OCI-LY7 (cell line): ENCODE measurements at regions of chr2 and their contacts with region 1.

Region 1: DNA sequence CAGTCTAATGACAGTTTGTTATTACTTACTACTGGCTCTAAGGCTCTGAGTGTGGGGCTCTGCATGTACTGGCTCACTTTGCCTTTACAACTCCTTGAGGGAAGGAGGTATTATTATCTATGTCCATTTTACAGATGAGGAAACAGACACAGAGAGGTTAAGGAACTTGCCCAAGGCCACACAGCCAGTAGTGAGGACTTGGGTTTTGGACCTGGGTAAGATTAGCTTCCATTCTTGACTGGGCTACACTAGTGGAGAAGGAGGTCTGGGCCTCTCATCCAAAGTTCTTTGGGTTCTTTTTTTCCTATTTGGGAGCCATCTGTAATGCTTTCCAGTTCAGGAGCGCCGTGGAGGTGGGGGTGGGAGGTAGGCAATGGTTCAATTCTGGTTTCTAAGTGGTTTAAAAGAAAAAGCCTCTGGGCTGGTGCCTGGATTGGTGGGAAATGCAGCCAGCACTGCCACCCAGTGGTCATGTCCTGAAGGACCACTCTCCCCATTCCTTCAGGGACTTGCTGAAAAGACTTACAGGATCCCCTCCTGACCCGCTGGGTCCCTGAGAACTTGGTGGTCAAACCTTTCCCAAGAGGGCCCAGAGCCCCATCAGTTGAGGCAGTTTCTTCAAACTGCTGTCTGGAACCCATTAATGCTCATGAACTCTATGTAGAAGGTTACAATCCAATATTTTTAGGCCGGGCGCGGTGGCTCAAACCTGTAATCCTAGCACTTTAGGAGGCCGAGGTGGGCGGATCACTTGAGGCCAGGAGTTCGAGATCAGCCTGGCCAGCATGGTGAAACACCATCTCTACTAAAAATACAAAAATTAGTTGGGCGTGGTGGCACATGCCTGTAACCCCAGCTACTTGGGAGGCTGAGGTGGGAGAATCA is 38.6 kb upstream of the NOTO start:
- DNase-seq: peak; percentile 53
- H3K4me3 ChIP-seq: no peak overlapping the region
- H3K27ac ChIP-seq: no peak overlapping the region
- H3K4me1 ChIP-seq: no peaks in the 10 kb centered on the region
- CTCF ChIP-seq: peak; percentile 87

Region 2: GRCh38 chr2:71736091-71736861 is 1427.4 kb before region 1 on chr2:
- CTCF ChIA-PET with region 1: no interaction called
- POLR2A ChIA-PET with region 1: no interaction called
- intact Hi-C with region 1: no loop called
- DNase-seq: no peak
- H3K4me3 ChIP-seq: no peak overlapping the region
- H3K27ac ChIP-seq: no peak overlapping the region
- H3K4me1 ChIP-seq: no peaks in the 10 kb centered on the region
- CTCF ChIP-seq: no peak

Region 3: DNA sequence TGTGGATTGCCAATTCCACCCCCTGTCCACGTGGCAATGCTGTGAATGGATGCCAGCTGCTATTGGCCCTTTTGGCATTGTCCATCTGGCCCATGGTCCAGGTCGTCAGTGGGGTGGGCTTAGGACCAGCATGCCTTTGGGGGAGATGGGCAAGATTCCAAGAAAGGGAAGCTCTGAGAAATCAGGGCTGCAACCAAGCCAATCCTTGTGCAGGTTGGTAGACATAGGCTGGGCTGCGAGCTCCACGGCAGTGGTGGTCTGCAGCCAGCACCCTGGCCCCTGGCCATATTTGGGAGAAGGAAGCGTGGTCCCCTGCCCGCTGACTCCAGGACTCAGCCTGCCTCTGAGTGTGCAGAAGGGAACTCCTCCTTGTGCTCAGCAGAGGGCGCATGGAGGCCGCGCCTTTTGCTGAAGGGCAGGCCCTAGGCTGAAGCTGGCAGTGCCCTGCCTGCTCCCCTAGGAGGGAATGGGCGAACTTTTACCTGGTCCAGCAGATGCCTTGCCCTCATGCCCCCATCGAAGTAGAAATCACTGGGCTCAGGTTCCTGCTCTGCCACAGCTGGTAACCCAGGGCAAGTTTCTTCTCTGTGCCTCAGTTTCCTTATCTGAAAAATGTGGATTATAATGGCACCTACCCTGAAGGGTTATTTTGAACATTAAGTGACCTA is 271.1 kb before region 1 on chr2:
- CTCF ChIA-PET with region 1: no interaction called
- POLR2A ChIA-PET with region 1: no interaction called
- intact Hi-C with region 1: loop called (anchors 5 kb)
- DNase-seq: peak; percentile 70
- H3K4me3 ChIP-seq: no peak overlapping the region
- H3K27ac ChIP-seq: no peak overlapping the region
- H3K4me1 ChIP-seq: no peaks in the 10 kb centered on the region
- CTCF ChIP-seq: peak; percentile 79

Region 4: GRCh38 chr2:72993147-72993932 is 170.4 kb before region 1 on chr2:
- CTCF ChIA-PET with region 1: no interaction called
- POLR2A ChIA-PET with region 1: no interaction called
- intact Hi-C with region 1: loop called (anchors 1 kb)
- DNase-seq: peak; percentile 59
- H3K4me3 ChIP-seq: no peak overlapping the region
- H3K27ac ChIP-seq: no peak overlapping the region
- H3K4me1 ChIP-seq: no peaks in the 10 kb centered on the region
- CTCF ChIP-seq: peak; percentile 83

Region 5: GRCh38 chr2:73085691-73086360 is 77.9 kb before region 1 on chr2:
- CTCF ChIA-PET with region 1: no interaction called
- POLR2A ChIA-PET with region 1: no interaction called
- intact Hi-C with region 1: loop called (anchors 1 kb)
- DNase-seq: peak; percentile 76
- H3K4me3 ChIP-seq: no peak overlapping the region
- H3K27ac ChIP-seq: no peak overlapping the region
- H3K4me1 ChIP-seq: no peaks in the 10 kb centered on the region
- CTCF ChIP-seq: peak; percentile 90

Region 6: GRCh38 chr2:73134471-73134870 is 29.3 kb before region 1 on chr2:
- CTCF ChIA-PET with region 1: no interaction called
- POLR2A ChIA-PET with region 1: no interaction called
- intact Hi-C with region 1: no loop called
- DNase-seq: no peak
- H3K4me3 ChIP-seq: no peak overlapping the region
- H3K27ac ChIP-seq: no peak overlapping the region
- H3K4me1 ChIP-seq: no peaks in the 10 kb centered on the region
- CTCF ChIP-seq: no peak

Region 7: DNA sequence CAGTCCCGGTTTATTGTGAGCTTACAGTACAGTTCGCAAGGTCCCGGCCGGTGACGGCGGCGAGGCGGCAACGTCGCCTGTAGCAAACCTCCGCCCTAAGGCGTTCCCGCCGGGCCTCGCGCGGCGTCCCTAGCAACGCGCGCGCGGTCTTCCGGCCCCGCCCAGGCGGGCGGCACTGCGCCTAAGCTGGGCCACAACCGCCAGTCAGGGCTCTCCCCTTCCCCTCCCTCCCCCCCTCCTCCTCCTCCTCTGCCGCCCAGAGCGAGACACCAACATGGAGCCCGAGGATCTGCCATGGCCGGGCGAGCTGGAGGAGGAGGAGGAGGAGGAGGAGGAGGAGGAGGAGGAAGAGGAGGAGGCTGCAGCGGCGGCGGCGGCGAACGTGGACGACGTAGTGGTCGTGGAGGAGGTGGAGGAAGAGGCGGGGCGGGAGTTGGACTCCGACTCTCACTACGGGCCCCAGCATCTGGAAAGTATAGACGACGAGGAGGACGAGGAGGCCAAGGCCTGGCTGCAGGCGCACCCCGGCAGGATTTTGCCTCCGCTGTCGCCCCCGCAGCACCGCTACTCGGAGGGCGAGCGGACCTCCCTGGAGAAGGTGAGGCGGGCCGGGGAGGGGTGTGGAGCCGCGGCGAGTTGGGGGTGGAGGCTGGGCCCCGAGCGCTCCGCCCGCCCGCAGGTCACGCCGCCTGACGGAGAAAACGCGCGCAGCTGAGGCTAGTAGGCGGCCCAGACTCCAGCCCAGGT is 222.0 kb after region 1 on chr2 and contains the start of gene ALMS1:
- CTCF ChIA-PET with region 1: interaction called, 18 read pairs
- POLR2A ChIA-PET with region 1: no interaction called
- intact Hi-C with region 1: no loop called
- DNase-seq: peak; percentile 96
- H3K4me3 ChIP-seq: peak within 1 kb of the TSS; percentile 89
- H3K27ac ChIP-seq: peak within 1 kb of the TSS; percentile 84
- H3K4me1 ChIP-seq: peaks cover 18% of the 10 kb centered on the region
- CTCF ChIP-seq: 0 out of 2 replicates have a peak, but pooled peaks have one; percentile 24
- total RNA-seq, gene ALMS1: 57.8 and 58.7 TPM in 2 replicates